ENCODE measurements at regions of chr10 and their contacts with region 1.

Region 1: GRCh38 chr10:10007957-10008356 is 1009.7 kb upstream of the CELF2 start:
- DNase-seq: no peak
- ATAC-seq: peak; percentile 61; the same call in 1 of the 2 replicates
- H3K4me3 ChIP-seq: no peak overlapping the region
- H3K27ac ChIP-seq: no peak overlapping the region
- H3K4me1 ChIP-seq: no peaks in the 10 kb centered on the region
- H3K27me3 ChIP-seq: no peaks in the 10 kb centered on the region
- CTCF ChIP-seq: no peak
- POLR2A ChIP-seq: no peak
- RAD21 ChIP-seq: no peak

Region 2: GRCh38 chr10:10056961-10057360 is 49.0 kb after region 1 on chr10:
- CTCF ChIA-PET with region 1: no interaction called
- POLR2A ChIA-PET with region 1: interaction called, 13 read pairs
- dilution Hi-C with region 1: no loop called
- in situ Hi-C with region 1: no loop called
- intact Hi-C with region 1: no loop called
- DNase-seq: peak; percentile 6
- ATAC-seq: peak; percentile 58
- H3K4me3 ChIP-seq: no peak overlapping the region
- H3K27ac ChIP-seq: no peak overlapping the region
- H3K4me1 ChIP-seq: peaks cover 2% of the 10 kb centered on the region; the same call in 1 of the 2 replicates
- H3K27me3 ChIP-seq: no peaks in the 10 kb centered on the region
- CTCF ChIP-seq: no peak
- POLR2A ChIP-seq: no peak
- RAD21 ChIP-seq: no peak

Region 3: DNA sequence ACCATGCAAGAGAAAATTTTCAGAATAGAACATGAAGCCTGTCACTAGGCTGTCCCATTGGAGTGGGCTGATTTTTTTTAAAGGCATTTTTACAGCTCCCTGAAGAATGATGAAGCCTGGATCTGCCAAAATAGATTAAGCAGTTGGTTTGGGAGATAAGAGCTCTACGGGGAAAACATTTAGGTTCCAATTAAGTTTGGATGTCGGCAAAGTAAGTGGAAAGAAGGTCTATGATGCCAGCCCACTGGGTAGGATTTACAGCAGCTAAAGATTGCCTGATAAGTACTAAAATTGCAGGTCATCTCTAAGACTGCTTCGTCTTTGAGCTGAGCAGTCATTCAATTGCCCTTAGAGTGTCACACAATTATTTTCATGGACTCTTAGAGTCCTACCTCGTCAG is 70.5 kb after region 1 on chr10:
- CTCF ChIA-PET with region 1: no interaction called
- POLR2A ChIA-PET with region 1: no interaction called
- dilution Hi-C with region 1: no loop called
- in situ Hi-C with region 1: no loop called
- intact Hi-C with region 1: no loop called
- DNase-seq: no peak
- ATAC-seq: no peak
- H3K4me3 ChIP-seq: no peak overlapping the region
- H3K27ac ChIP-seq: no peak overlapping the region
- H3K4me1 ChIP-seq: no peaks in the 10 kb centered on the region
- H3K27me3 ChIP-seq: no peaks in the 10 kb centered on the region
- CTCF ChIP-seq: no peak
- POLR2A ChIP-seq: no peak
- RAD21 ChIP-seq: no peak

Measured in IMR-90 (cell line).